Heart right ventricle (tissue), 16 donors: ENCODE measurements at regions of chr1 and their contacts with region 1.

Region 1: DNA sequence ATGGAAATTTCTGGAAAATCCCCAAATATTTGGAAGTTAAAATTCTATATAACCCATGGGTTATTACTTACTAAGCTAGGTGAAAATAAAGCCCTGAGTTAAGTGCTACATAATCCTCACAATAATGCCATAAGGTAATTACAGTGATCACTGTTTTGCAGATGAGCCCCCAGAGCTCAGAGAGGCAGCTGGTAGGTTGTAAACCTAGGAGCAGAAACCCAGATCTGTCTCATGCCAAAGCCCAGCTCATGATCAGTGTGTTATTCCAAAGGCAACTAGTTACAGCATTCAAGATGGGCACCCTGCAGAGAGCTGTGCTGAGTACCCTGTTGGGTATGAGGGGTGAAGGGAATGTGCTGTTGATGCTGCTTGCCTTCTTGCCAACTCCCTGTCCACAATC is 10.8 kb upstream of the MYOG start:
- DNase-seq: no peak
- ATAC-seq: no peak
- H3K4me3 ChIP-seq: no peak overlapping the region
- H3K27ac ChIP-seq: no peak overlapping the region
- H3K4me1 ChIP-seq: no peaks in the 10 kb centered on the region
- H3K27me3 ChIP-seq: peaks cover 0 to 4% (median 0%) of the 10 kb centered on the region in 7 donors
- CTCF ChIP-seq: no peak

Region 2: DNA sequence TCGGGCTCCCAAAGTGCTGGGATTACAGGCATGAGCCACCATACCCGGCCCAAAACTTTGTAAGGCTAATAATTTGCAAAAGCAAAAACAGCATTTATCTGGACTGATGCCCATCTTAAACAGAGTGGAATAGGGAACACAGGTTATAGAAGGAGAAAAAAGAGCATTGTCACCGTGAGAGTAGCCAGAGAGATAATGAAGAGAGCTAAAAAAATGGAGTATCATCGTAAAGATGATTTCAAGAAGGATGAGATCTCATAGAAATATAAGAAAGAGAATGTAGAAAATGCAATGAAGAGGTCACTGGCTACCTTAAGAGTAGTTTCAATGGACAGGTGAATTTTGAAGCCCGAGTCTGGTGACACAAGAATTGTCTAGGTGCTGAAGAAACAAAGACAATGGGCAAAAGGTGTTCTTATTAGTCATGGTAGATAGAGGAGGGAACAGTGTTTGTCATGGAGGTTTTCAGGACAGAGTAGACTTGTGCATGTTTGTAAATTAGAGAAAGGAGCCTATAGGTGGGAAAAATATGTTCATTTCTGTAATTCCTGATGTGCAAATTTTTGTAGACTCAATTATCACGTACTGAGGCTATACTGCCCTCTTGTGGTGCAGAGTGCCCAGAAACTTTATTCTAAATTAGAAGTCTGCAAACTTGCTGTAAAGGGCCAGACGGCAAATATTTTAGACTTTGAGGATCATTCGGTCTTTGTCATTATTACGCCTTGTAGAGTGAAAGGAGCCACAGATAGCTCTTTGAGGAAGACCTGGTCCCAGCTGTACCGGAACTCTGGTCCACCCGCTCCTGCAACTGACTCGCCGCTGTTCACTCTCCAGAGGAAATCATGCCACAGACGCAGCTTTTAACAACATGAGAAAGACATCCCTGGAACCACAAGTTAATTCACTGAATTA is 97.5 kb before region 1 on chr1:
- intact Hi-C with region 1: no loop called
- DNase-seq: peak in 1 of 2 donors; percentile 44
- ATAC-seq: peak in 2 of 8 donors; percentile 10 to 22
- H3K4me3 ChIP-seq: no peak overlapping the region
- H3K27ac ChIP-seq: no peak overlapping the region
- H3K4me1 ChIP-seq: peaks cover 0 to 6% (median 0%) of the 10 kb centered on the region in 9 donors
- H3K27me3 ChIP-seq: peaks cover 0 to 23% (median 16%) of the 10 kb centered on the region in 7 donors
- CTCF ChIP-seq: peak; percentile 70 to 87 (median 81)

Region 3: GRCh38 chr1:203142684-203143408 is 46.3 kb after region 1 on chr1:
- intact Hi-C with region 1: loop called in 1 of 10 experiments (anchors 1 kb)
- DNase-seq: no peak
- ATAC-seq: no peak
- H3K4me3 ChIP-seq: no peak overlapping the region
- H3K27ac ChIP-seq: no peak overlapping the region
- H3K4me1 ChIP-seq: peaks cover 0 to 11% (median 9%) of the 10 kb centered on the region in 9 donors
- H3K27me3 ChIP-seq: peaks cover 0 to 3% (median 0%) of the 10 kb centered on the region in 7 donors
- CTCF ChIP-seq: no peak